Cardiac septum (tissue), 1 donor: ENCODE measurements at regions of chr20 and their contacts with region 1.

Region 1: GRCh38 chr20:47216819-47217410 is 139.6 kb downstream of the ZMYND8 start:
- DNase-seq: no peak

Region 2: GRCh38 chr20:47099825-47100441 is 117.0 kb before region 1 on chr20:
- intact Hi-C with region 1: no loop called
- DNase-seq: no peak

Region 3: GRCh38 chr20:47124181-47124717 is 92.7 kb before region 1 on chr20:
- intact Hi-C with region 1: no loop called
- DNase-seq: peak; percentile 73

Region 4: GRCh38 chr20:47258745-47259695 is 42.1 kb after region 1 on chr20:
- intact Hi-C with region 1: loop called (anchors 5 kb)
- DNase-seq: peak; percentile 77

Region 5: GRCh38 chr20:47493175-47493962 is 276.5 kb after region 1 on chr20:
- intact Hi-C with region 1: loop called (anchors 10 kb)
- DNase-seq: peak; percentile 86